PC-3 (cell line): ENCODE measurements at regions of chr14 and their contacts with region 1.

Region 1: GRCh38 chr14:100122481-100123222 is 36.8 kb downstream of the DEGS2 start:
- DNase-seq: no peak
- ATAC-seq: no peak
- H3K4me3 ChIP-seq: no peak overlapping the region
- H3K27ac ChIP-seq: no peak overlapping the region
- H3K4me1 ChIP-seq: no peaks in the 10 kb centered on the region
- H3K27me3 ChIP-seq: no peaks in the 10 kb centered on the region
- CTCF ChIP-seq: peak; percentile 25; the same call in 1 of the 2 replicates

Region 2: GRCh38 chr14:99872786-99873440 is 249.7 kb before region 1 on chr14:
- CTCF ChIA-PET with region 1: no interaction called
- POLR2A ChIA-PET with region 1: no interaction called
- intact Hi-C with region 1: no loop called
- DNase-seq: no peak
- ATAC-seq: no peak
- H3K4me3 ChIP-seq: no peak overlapping the region
- H3K27ac ChIP-seq: no peak overlapping the region
- H3K4me1 ChIP-seq: no peaks in the 10 kb centered on the region
- H3K27me3 ChIP-seq: no peaks in the 10 kb centered on the region
- CTCF ChIP-seq: no peak

Region 3: GRCh38 chr14:99982537-99983250 is 140.0 kb before region 1 on chr14:
- CTCF ChIA-PET with region 1: no interaction called
- POLR2A ChIA-PET with region 1: no interaction called
- intact Hi-C with region 1: no loop called
- DNase-seq: peak; percentile 71
- ATAC-seq: peak; percentile 74
- H3K4me3 ChIP-seq: no peak overlapping the region
- H3K27ac ChIP-seq: no peak overlapping the region
- H3K4me1 ChIP-seq: peaks cover 14% of the 10 kb centered on the region
- H3K27me3 ChIP-seq: no peaks in the 10 kb centered on the region
- CTCF ChIP-seq: peak; percentile 90

Region 4: DNA sequence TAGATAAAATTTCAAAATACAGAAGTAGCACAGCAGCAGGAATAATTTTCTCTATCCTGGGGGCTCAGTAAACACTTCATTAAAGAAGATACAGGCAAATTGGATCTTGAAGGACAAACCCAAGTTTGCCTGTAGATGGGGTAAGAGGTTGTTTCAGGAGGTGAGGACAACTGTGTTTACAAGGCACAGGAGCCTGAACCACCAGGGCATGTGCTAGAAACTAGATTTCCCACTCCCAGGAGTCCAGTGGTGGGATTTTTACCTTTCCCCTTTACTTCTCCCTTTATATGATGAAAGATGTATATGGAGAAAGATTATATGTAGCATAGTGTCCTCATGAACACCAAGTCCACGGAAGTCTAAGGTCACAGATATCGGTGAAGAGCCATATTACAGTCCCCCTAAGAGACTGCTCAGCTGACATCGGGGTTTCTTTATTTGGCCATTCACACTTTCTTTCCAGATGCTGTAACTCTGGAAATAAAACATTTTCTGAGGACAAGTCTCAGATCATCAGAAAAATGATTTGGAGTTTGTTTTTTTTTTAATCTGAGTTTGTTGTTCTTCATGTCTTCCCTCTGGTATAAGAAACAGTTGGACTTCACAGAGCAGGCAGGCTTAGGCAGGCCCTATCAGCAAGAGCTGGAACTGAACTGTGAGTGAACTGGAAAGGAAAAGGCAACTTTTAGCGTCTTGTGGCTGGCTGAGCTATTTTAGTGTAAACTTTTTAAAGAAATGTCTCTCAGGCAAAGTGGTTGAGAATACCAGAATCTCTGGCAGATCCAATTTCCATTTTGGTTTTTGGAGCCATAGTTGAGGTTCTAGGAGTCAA is 65.5 kb before region 1 on chr14:
- CTCF ChIA-PET with region 1: no interaction called
- POLR2A ChIA-PET with region 1: no interaction called
- intact Hi-C with region 1: no loop called
- DNase-seq: peak; percentile 51
- ATAC-seq: peak; percentile 27; the same call in 1 of the 2 replicates
- H3K4me3 ChIP-seq: no peak overlapping the region
- H3K27ac ChIP-seq: no peak overlapping the region
- H3K4me1 ChIP-seq: peaks cover 21% of the 10 kb centered on the region
- H3K27me3 ChIP-seq: no peaks in the 10 kb centered on the region
- CTCF ChIP-seq: peak; percentile 61

Region 5: GRCh38 chr14:100159094-100159864 is 36.6 kb after region 1 on chr14 and contains the start of gene DEGS2:
- CTCF ChIA-PET with region 1: interaction called, 13 read pairs
- POLR2A ChIA-PET with region 1: no interaction called
- intact Hi-C with region 1: no loop called
- DNase-seq: peak; percentile 56
- ATAC-seq: peak; percentile 50
- H3K4me3 ChIP-seq: peak within 1 kb of the TSS; percentile 71
- H3K27ac ChIP-seq: no peak within 1 kb of the TSS
- H3K4me1 ChIP-seq: peaks cover 12% of the 10 kb centered on the region; the same call in 1 of the 2 replicates
- H3K27me3 ChIP-seq: peaks cover 9% of the 10 kb centered on the region; the same call in 1 of the 2 replicates
- CTCF ChIP-seq: no peak
- total RNA-seq, gene DEGS2: 1.6 and 5.4 TPM in 2 replicates